Naive thymus-derived CD4-positive, alpha-beta T cell (primary cell): ENCODE measurements at regions of chr19 and their contacts with region 1.

Region 1: DNA sequence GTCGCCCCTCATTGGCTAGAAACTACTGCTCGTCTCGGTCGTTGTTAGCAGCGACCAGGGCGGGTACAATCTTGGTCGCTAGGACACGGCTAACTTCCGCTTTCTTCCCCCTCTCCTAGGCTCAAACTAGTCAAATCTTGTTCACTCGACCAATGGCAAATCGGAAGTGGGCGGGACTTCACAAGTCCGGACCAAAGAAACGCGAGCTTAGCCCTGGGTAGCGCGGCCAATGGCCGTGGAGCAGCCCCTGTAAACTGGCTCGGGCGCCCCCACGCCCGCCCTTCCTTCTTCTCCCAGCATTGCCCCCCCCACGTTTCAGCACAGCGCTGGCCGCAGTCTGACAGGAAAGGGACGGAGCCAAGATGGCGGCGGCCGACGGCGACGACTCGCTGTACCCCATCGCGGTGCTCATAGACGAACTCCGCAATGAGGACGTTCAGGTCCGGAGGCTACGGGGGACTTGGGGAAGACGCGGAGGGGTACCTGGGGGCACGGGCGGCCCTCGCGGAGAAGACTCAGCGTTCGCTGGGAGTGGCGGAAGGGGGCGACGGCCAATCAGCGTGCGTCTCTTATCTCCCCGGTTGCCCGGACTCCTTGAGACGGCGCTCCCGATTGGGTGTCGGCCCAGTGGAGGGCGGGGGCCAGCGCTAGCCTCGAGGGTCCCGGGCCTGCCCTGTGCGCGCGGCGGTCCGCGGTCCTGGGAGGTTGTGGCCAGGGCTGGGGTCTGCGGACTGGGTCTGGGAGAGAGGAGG is at the start of gene PPP2R1A:
- DNase-seq: peak; percentile 97 to 100 (median 99)
- ATAC-seq: peak; percentile 91
- H3K4me3 ChIP-seq: peak within 1 kb of the TSS; percentile 86
- H3K4me3 Mint-ChIP-seq: peak within 1 kb of the TSS; percentile 91 to 99 (median 96)
- H3K27ac ChIP-seq: peak within 1 kb of the TSS; percentile 97
- H3K27ac Mint-ChIP-seq: peak within 1 kb of the TSS; percentile 95 to 100 (median 99)
- H3K4me1 ChIP-seq: peaks cover 34 to 39% of the 10 kb centered on the region in 2 donors
- H3K4me1 Mint-ChIP-seq: peaks cover 29 to 59% (median 46%) of the 10 kb centered on the region in 7 donors
- H3K27me3 ChIP-seq: no peaks in the 10 kb centered on the region
- H3K27me3 Mint-ChIP-seq: no peaks in the 10 kb centered on the region
- total RNA-seq, gene PPP2R1A: 156 to 215 (median 168) TPM

Region 2: GRCh38 chr19:51926784-51927742 is 262.8 kb before region 1 on chr19 and contains the start of gene ZNF613:
- CTCF ChIA-PET with region 1: no interaction called
- POLR2A ChIA-PET with region 1: no interaction called
- intact Hi-C with region 1: loop called in 1 of 2 experiments (anchors 2 kb)
- DNase-seq: peak; percentile 65 to 87 (median 83)
- ATAC-seq: peak; percentile 92
- H3K4me3 ChIP-seq: peak within 1 kb of the TSS; percentile 70
- H3K4me3 Mint-ChIP-seq: peak within 1 kb of the TSS; percentile 90 to 100 (median 97)
- H3K27ac ChIP-seq: peak within 1 kb of the TSS; percentile 77
- H3K27ac Mint-ChIP-seq: peak within 1 kb of the TSS; percentile 87 to 96 (median 92)
- H3K4me1 ChIP-seq: peaks cover 4% of the 10 kb centered on the region in 2 donors
- H3K4me1 Mint-ChIP-seq: peaks cover 19 to 41% (median 36%) of the 10 kb centered on the region in 7 donors
- H3K27me3 ChIP-seq: no peaks in the 10 kb centered on the region
- H3K27me3 Mint-ChIP-seq: no peaks in the 10 kb centered on the region
- total RNA-seq, gene ZNF613: 1.5 to 9.6 (median 5.2) TPM

Region 3: DNA sequence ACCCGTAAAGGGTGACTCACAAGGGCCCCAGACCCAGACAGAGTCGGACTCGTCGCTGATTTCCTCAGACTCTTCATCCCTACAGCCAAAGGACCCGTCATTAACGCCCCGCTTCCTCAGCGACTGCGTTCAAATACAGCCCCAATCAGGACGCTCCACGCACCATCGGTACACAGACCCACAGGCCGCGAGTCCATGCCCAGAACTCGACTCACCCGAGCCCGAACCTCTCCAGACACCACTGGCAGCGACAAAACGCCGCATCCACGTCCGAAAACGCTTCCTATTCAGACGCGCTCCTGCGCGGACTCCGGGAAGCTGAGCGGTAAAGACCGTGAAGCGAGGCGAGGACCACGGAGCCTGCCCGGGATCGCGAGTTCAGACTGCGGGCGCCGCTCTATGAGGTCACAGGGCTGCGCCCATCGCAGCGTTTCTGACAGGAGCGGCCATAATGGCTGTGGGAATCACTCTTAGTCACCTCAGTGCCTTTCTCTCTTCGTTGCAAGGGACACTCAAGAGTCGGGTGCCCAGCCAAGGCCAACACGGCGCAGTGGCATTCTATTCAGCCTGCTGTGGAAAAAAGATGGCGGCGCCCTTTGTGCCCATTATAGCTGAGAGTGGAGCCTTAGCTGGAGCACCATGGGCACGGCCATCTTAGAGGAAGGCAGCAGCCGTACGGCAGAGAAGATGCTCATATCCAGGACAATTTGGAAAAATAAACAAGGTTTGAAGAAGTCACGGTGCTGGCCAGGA is 161.7 kb before region 1 on chr19 and contains the start of gene ZNF614:
- CTCF ChIA-PET with region 1: no interaction called
- POLR2A ChIA-PET with region 1: interaction called, 5 read pairs
- intact Hi-C with region 1: loop called in 1 of 2 experiments (anchors 2 kb)
- DNase-seq: peak; percentile 80 to 95 (median 89)
- ATAC-seq: peak; percentile 93
- H3K4me3 ChIP-seq: peak within 1 kb of the TSS; percentile 89
- H3K4me3 Mint-ChIP-seq: peak within 1 kb of the TSS; percentile 89 to 99 (median 96)
- H3K27ac ChIP-seq: peak within 1 kb of the TSS; percentile 90
- H3K27ac Mint-ChIP-seq: peak within 1 kb of the TSS; percentile 91 to 99 (median 96)
- H3K4me1 ChIP-seq: peaks cover 12 to 16% of the 10 kb centered on the region in 2 donors
- H3K4me1 Mint-ChIP-seq: peaks cover 6 to 35% (median 31%) of the 10 kb centered on the region in 7 donors
- H3K27me3 ChIP-seq: no peaks in the 10 kb centered on the region
- H3K27me3 Mint-ChIP-seq: no peaks in the 10 kb centered on the region
- total RNA-seq, gene ZNF614: 5.0 to 14.1 (median 11.1) TPM

Region 4: GRCh38 chr19:52171321-52172169 is 18.4 kb before region 1 on chr19 and contains the start of gene ZNF836:
- CTCF ChIA-PET with region 1: interaction called, 8 read pairs
- POLR2A ChIA-PET with region 1: interaction called, 41 read pairs
- intact Hi-C with region 1: loop called (anchors 1 kb)
- DNase-seq: peak; percentile 72 to 95 (median 91)
- ATAC-seq: peak; percentile 98
- H3K4me3 ChIP-seq: peak within 1 kb of the TSS; percentile 92
- H3K4me3 Mint-ChIP-seq: peak within 1 kb of the TSS; percentile 92 to 98 (median 96)
- H3K27ac ChIP-seq: peak within 1 kb of the TSS; percentile 92
- H3K27ac Mint-ChIP-seq: peak within 1 kb of the TSS; percentile 96 to 99 (median 98)
- H3K4me1 ChIP-seq: peaks cover 18 to 19% of the 10 kb centered on the region in 2 donors
- H3K4me1 Mint-ChIP-seq: peaks cover 23 to 48% (median 45%) of the 10 kb centered on the region in 7 donors
- H3K27me3 ChIP-seq: no peaks in the 10 kb centered on the region
- H3K27me3 Mint-ChIP-seq: no peaks in the 10 kb centered on the region
- total RNA-seq, gene ZNF836: 20.1 to 57.5 (median 27.4) TPM

Region 5: DNA sequence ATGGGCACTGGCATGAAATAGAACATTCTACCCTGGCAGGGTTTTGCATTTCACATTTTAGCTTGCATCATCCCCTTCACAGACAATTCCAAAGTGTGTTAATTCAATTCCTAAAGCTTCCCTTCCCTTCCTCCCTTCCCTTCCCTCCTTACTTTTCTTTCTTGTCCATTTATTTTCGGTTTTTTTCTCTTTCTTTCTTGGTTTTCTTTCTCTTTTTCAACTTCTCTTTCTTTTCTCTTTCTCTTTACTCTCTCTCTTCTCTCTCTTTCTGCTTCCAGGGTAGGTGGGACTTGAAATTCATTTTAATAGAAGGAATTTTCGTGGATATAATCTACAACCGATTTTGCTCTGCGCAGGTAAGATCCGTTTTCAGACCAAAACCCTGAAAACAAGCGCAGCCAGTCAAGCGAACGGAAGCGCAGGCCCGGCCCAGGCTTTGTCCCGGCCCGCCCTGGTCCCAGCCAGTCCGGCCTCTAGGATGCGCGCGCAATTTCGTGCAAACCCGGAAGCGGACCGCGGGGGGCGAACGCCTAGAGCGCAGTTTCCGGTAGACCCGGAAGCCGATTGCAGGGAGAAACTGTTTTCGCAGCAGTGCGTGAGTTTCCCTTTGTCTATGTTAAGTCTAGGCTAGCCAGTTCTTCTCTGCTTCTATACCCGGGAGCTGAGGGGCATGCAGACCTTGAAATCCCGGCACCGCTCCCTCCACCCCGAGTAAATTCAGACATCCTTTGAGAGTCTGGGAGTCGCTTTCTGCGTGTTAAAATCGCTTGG is 207.6 kb after region 1 on chr19 and contains the start of gene ZNF528:
- CTCF ChIA-PET with region 1: no interaction called
- POLR2A ChIA-PET with region 1: no interaction called
- intact Hi-C with region 1: loop called in 1 of 2 experiments (anchors 1 kb)
- DNase-seq: peak; percentile 78 to 95 (median 87)
- ATAC-seq: peak; percentile 98
- H3K4me3 ChIP-seq: peak within 1 kb of the TSS; percentile 94
- H3K4me3 Mint-ChIP-seq: peak within 1 kb of the TSS; percentile 80 to 93 (median 90)
- H3K27ac ChIP-seq: peak within 1 kb of the TSS; percentile 65
- H3K27ac Mint-ChIP-seq: peak within 1 kb of the TSS; percentile 88 to 96 (median 91)
- H3K4me1 ChIP-seq: peaks cover 5 to 12% of the 10 kb centered on the region in 2 donors
- H3K4me1 Mint-ChIP-seq: peaks cover 15 to 34% (median 25%) of the 10 kb centered on the region in 7 donors
- H3K27me3 ChIP-seq: no peaks in the 10 kb centered on the region
- H3K27me3 Mint-ChIP-seq: no peaks in the 10 kb centered on the region
- total RNA-seq, gene ZNF528: 10.6 to 47.3 (median 23.0) TPM

Region 6: GRCh38 chr19:52601025-52601973 is 411.4 kb after region 1 on chr19:
- CTCF ChIA-PET with region 1: no interaction called
- POLR2A ChIA-PET with region 1: no interaction called
- intact Hi-C with region 1: loop called in 1 of 2 experiments (anchors 1 kb)
- DNase-seq: peak; percentile 84 to 94 (median 91)
- ATAC-seq: peak; percentile 100
- H3K4me3 ChIP-seq: peak overlapping the region; percentile 89
- H3K4me3 Mint-ChIP-seq: peak overlapping the region; percentile 86 to 99 (median 92)
- H3K27ac ChIP-seq: peak overlapping the region; percentile 81
- H3K27ac Mint-ChIP-seq: peak overlapping the region; percentile 63 to 93 (median 81)
- H3K4me1 ChIP-seq: peaks cover 10 to 12% of the 10 kb centered on the region in 2 donors
- H3K4me1 Mint-ChIP-seq: peaks cover 11 to 43% (median 37%) of the 10 kb centered on the region in 7 donors
- H3K27me3 ChIP-seq: no peaks in the 10 kb centered on the region
- H3K27me3 Mint-ChIP-seq: no peaks in the 10 kb centered on the region

Region 7: GRCh38 chr19:53867225-53868090 is 1677.5 kb after region 1 on chr19 and contains the start of gene MYADM:
- CTCF ChIA-PET with region 1: no interaction called
- POLR2A ChIA-PET with region 1: interaction called, 3 read pairs
- intact Hi-C with region 1: loop called in 1 of 2 experiments (anchors 5 kb)
- DNase-seq: peak; percentile 99 to 100 (median 100)
- ATAC-seq: peak; percentile 80
- H3K4me3 ChIP-seq: peak within 1 kb of the TSS; percentile 90
- H3K4me3 Mint-ChIP-seq: peak within 1 kb of the TSS; percentile 92 to 100 (median 97)
- H3K27ac ChIP-seq: peak within 1 kb of the TSS; percentile 99
- H3K27ac Mint-ChIP-seq: peak within 1 kb of the TSS; percentile 97 to 100 (median 99)
- H3K4me1 ChIP-seq: peaks cover 17 to 26% of the 10 kb centered on the region in 2 donors
- H3K4me1 Mint-ChIP-seq: peaks cover 15 to 45% (median 34%) of the 10 kb centered on the region in 7 donors
- H3K27me3 ChIP-seq: no peaks in the 10 kb centered on the region
- H3K27me3 Mint-ChIP-seq: peaks cover 0 to 5% (median 0%) of the 10 kb centered on the region in 5 donors
- total RNA-seq, gene MYADM: 51.5 to 524 (median 116) TPM